GM12878 (cell line): ENCODE measurements at regions of chr2 and their contacts with region 1.

Region 1: GRCh38 chr2:241844066-241844728 is 14.5 kb downstream of the PDCD1 start:
- DNase-seq: no peak
- ATAC-seq: peak; percentile 83
- H3K4me3 ChIP-seq: peak overlapping the region; percentile 28; the same call in 1 of the 2 replicates
- H3K27ac ChIP-seq: peak overlapping the region; percentile 18; the same call in 1 of the 2 replicates
- H3K4me1 ChIP-seq: peaks cover 23% of the 10 kb centered on the region
- H3K27me3 ChIP-seq: no peaks in the 10 kb centered on the region; a peak in 1 of 4 replicates
- CTCF ChIP-seq: no peak
- EP300 ChIP-seq: peak; percentile 41 to 42; a peak in 1 of 4 replicates
- POLR2A ChIP-seq: peak; percentile 67
- RAD21 ChIP-seq: no peak

Region 2: DNA sequence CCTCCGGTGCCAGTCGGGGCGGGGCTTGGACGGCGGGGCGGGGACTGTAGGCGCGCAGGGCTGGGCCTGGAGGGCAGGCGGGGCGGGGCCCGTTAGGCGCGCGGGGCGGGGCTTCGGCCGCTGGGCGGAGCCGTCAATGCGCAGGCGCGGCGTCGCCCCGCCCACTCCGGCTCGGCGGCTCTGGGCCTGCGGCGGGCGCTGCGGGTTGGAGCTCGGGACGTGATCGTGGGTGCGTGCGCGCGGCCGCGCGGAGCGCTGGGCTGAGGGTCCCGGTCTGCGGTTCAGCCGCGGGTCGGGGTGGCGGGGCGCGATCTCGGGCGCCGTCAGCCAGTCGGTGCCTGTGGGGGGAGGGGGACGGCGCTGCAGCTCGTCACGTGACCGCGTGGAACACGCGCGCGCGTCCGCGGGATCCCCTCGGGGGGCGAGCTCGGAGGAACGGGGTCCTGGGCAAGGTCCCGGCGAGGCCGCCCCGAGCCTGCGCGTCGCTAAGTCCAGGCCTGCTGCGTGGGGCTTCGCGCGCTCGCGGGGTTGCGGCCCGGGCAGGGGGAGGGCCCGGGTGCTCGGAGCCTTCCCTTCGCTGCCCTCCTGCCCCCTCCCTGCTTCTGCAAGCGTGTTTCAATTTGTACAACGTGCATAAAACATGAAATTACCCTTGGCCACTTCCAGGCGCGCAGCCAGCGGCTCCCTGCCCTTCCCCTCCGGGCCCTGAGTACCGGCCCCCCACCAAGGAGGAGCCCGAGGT is 109.6 kb before region 1 on chr2 and contains the start of gene D2HGDH:
- CTCF ChIA-PET with region 1: interaction called, 3 read pairs
- POLR2A ChIA-PET with region 1: no interaction called
- RAD21 ChIA-PET with region 1: interaction called, 3 read pairs
- SMC1A ChIA-PET with region 1: interaction called, 5 read pairs
- in situ Hi-C with region 1: no loop called
- intact Hi-C with region 1: loop called (anchors 10 kb)
- DNase-seq: no peak
- ATAC-seq: peak; percentile 90
- H3K4me3 ChIP-seq: peak within 1 kb of the TSS; percentile 84
- H3K27ac ChIP-seq: peak within 1 kb of the TSS; percentile 86
- H3K4me1 ChIP-seq: 0 out of 2 replicates have a peak, but pooled peaks cover 3% of the 10 kb centered on the region
- H3K27me3 ChIP-seq: no peaks in the 10 kb centered on the region
- CTCF ChIP-seq: no peak
- EP300 ChIP-seq: no peak
- POLR2A ChIP-seq: peak; percentile 83
- RAD21 ChIP-seq: no peak
- polyA plus RNA-seq, gene D2HGDH: 0.52 to 1.1 TPM

Region 3: DNA sequence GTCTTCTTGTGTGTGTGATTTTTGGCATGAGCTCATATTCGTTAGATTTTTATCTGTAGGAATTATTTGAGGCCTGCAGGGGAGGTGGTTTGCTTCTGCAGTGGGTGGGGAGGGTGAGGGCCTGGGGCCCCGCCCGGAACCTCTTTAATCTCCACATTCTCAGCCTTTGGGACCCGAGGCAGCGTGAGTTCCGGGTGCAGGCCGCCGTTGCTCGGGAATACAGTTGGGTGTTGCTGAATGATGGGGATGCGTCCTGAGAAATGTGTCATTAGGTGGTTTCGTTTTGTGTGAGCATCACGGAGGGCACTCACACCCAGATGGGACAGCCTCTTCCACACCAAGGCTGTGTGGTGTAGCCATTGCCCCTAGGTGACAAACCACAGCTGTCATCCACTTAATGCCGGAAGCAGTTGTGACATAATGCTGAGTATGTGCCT is 81.2 kb before region 1 on chr2:
- CTCF ChIA-PET with region 1: no interaction called
- POLR2A ChIA-PET with region 1: interaction called, 11 read pairs
- RAD21 ChIA-PET with region 1: interaction called, 3 read pairs
- SMC1A ChIA-PET with region 1: interaction called, 5 read pairs
- in situ Hi-C with region 1: no loop called
- intact Hi-C with region 1: no loop called
- DNase-seq: peak; percentile 21
- ATAC-seq: peak; percentile 99
- H3K4me3 ChIP-seq: no peak overlapping the region
- H3K27ac ChIP-seq: peak overlapping the region; percentile 57
- H3K4me1 ChIP-seq: peaks cover 11% of the 10 kb centered on the region
- H3K27me3 ChIP-seq: no peaks in the 10 kb centered on the region
- CTCF ChIP-seq: no peak
- EP300 ChIP-seq: peak in 1 of 2 experiments; percentile 38; a peak in 1 of 4 replicates
- POLR2A ChIP-seq: peak; percentile 44; the same call in 1 of the 2 replicates
- RAD21 ChIP-seq: 0 out of 2 replicates have a peak, but pooled peaks have one; percentile 2

Region 4: DNA sequence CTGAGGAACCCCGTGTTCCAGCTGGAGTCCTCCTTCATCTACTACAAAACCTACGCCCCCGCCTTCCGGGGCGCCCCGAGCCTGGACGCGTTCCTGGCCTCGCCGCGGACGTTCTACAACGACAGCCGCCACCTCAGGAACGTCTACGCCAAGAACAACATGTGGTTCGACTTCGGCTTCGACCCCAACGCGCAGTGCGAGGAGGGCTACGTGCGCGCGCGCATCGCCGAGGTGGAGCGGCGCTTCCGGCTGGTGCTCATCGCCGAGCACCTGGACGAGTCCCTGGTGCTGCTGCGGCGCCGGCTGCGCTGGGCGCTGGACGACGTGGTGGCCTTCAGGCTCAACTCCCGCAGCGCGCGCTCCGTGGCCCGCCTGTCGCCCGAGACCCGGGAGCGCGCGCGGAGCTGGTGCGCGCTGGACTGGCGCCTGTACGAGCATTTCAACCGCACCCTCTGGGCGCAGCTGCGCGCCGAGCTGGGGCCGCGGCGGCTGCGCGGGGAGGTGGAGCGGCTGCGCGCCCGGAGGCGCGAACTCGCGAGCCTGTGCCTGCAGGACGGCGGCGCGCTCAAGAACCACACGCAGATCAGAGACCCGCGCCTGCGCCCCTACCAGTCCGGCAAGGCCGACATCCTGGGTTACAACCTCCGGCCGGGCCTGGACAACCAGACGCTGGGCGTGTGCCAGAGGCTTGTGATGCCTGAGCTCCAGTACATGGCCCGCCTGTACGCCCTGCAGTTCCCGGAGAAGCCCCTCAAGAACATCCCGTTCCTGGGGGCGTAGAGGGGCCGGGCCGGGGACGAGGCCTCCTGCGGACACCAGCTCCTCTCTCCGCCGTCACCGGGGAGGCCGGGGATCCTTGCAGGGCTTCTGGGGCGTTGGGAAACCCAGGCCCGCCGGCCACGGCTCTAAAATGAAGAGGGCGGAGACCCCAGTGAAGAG is 40.5 kb before region 1 on chr2:
- CTCF ChIA-PET with region 1: no interaction called
- POLR2A ChIA-PET with region 1: no interaction called
- RAD21 ChIA-PET with region 1: no interaction called
- SMC1A ChIA-PET with region 1: no interaction called
- in situ Hi-C with region 1: no loop called
- intact Hi-C with region 1: loop called (anchors 5 kb)
- DNase-seq: no peak
- ATAC-seq: peak; percentile 81
- H3K4me3 ChIP-seq: peak overlapping the region; percentile 69
- H3K27ac ChIP-seq: no peak overlapping the region
- H3K4me1 ChIP-seq: peaks cover 14% of the 10 kb centered on the region
- H3K27me3 ChIP-seq: no peaks in the 10 kb centered on the region; a peak in 1 of 4 replicates
- CTCF ChIP-seq: no peak
- EP300 ChIP-seq: no peak
- POLR2A ChIP-seq: peak; percentile 75
- RAD21 ChIP-seq: no peak

Region 5: DNA sequence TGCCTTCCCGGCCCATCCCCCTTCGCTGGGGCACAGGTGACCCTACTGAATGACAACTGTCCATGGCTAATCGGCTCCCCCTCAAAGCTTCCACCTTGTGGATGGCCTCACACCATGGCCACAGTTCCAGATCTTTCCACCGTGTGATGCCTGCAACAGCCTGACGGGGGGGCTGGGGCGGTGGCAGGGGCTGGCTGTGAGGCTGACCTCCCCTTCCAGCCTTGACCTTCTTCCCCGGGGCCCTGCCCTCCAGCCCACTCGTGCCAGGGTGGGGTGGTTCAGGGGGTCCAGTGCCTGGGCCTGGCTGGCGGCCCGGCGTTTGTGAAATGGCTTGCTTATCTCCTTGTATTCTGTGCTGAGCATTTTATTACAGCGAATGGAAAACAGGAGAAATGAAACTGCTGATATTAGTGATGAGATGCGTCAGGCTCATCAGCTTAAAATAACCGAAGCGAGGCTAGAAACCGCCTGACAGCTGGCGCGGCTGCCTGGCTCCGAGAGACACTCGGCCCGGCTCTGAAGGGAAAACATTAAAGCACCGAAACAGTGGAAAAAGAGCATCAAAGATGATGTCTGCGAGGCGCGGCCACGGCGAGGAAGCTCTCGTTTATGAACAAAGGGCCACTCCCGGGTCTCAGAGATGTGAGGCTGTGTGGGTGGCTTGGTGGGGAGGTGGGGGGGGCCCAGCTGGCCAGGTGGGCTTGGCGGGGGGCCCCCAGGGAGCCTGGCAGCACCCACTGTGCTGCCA is 15.4 kb after region 1 on chr2:
- CTCF ChIA-PET with region 1: no interaction called
- POLR2A ChIA-PET with region 1: interaction called, 26 read pairs
- RAD21 ChIA-PET with region 1: interaction called, 16 read pairs
- SMC1A ChIA-PET with region 1: interaction called, 6 read pairs
- in situ Hi-C with region 1: no loop called
- intact Hi-C with region 1: no loop called
- DNase-seq: no peak
- ATAC-seq: peak; percentile 66
- H3K4me3 ChIP-seq: peak overlapping the region; percentile 56; the same call in 1 of the 2 replicates
- H3K27ac ChIP-seq: peak overlapping the region; percentile 97
- H3K4me1 ChIP-seq: peaks cover 43% of the 10 kb centered on the region
- H3K27me3 ChIP-seq: no peaks in the 10 kb centered on the region; a peak in 1 of 4 replicates
- CTCF ChIP-seq: peak; percentile 22 to 56 (median 47)
- EP300 ChIP-seq: peak; percentile 80 to 85
- POLR2A ChIP-seq: peak; percentile 49; the same call in 1 of the 2 replicates
- RAD21 ChIP-seq: no peak